Astrocyte of the cerebellum (primary cell): ENCODE measurements at regions of chr6 and their contacts with region 1.

Region 1: DNA sequence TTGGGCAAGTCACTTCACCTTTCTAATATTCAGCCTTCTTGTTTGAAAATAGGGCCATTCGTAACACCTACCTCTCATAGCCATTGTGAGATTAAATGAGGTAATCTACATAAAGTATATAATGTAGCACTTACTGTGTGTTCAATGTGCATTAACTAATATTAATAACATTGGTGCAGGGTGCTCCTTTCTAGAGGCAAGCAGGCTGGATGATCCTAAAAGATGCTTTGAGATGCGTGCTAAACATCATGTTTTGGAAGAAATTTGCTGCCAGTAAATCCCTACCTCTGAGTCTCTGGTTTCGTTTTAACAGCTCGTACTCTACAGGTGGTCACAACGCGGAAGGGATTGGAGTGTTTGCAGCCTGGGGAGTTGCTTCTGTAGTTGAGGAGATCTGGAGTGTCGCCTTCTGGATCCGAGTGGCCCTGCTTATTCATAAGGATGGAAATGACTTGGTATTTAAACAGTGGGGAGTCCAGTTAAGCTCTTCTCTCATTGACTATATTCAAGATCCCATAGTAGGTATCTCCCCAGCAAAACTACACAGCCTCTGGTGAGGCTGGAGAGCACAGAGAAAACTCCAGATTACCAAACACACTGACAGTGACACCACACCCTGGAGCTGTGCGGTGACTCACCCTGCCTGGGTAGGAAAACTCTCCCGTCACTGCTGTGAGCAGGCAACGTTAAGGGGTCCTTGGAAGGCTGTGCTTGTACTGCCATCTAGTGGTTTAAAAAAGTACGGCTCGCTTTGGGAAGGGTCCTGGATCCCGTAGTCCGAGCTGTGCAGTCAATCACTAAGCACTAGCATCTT is 107.9 kb downstream of the MAP3K7 start:
- DNase-seq: peak; percentile 90
- H3K4me3 ChIP-seq: no peak overlapping the region
- CTCF ChIP-seq: peak; percentile 79

Region 2: DNA sequence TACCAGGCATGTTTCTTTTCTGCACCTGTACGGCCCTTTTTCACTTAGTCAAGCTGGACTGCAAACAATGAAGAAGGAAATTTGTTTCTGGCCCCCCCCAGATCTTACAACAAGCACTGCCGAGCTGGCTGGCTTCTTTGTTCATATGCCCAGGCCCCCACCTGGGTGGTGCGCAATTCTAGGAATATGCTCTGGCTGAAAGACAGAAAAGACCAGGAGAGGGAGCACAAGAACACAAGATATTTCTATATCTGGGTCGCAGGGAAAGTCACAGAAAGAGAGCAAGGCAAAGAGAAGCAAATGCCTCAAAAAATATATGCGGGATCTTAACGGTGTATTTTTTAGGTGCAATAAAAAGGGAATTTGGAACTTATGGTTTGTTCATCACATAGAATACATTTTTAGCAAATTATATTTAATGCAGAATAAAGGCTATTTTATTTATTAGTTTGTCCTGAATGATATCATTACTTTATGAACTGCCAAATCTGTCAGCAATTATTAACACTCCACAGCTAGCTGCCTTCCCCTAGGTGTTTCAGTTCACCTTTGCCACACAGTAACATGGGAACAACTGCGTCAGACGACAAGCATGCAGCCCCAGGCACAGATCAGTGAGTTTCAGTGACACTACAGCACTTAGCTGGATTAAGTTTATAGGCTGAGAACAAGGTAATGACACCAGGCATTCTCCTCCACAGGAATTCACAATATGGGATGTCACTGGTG is 508.2 kb before region 1 on chr6:
- in situ Hi-C with region 1: loop called (anchors 25 kb)
- DNase-seq: peak; percentile 58
- H3K4me3 ChIP-seq: no peak overlapping the region
- CTCF ChIP-seq: peak; percentile 65

Region 3: GRCh38 chr6:90403489-90404381 is 75.3 kb before region 1 on chr6:
- in situ Hi-C with region 1: no loop called
- DNase-seq: peak; percentile 70
- H3K4me3 ChIP-seq: no peak overlapping the region
- CTCF ChIP-seq: peak; percentile 3